Activated CD4-positive, alpha-beta T cell treated with anti-CD3 and anti-CD28 coated beads for 36 hours (primary cell): ENCODE measurements at regions of chr1 and their contacts with region 1.

Region 1: GRCh38 chr1:7902478-7903085 is 38.1 kb downstream of the TNFRSF9 start:
- DNase-seq: peak; percentile 74
- ATAC-seq: peak; percentile 83
- H3K4me3 Mint-ChIP-seq: no peak overlapping the region
- H3K27ac Mint-ChIP-seq: no peak overlapping the region
- H3K4me1 Mint-ChIP-seq: no peaks in the 10 kb centered on the region
- H3K27me3 Mint-ChIP-seq: peaks cover 4% of the 10 kb centered on the region

Region 2: GRCh38 chr1:7667625-7668218 is 234.9 kb before region 1 on chr1:
- CTCF ChIA-PET with region 1: interaction called, 4 read pairs
- POLR2A ChIA-PET with region 1: no interaction called
- intact Hi-C with region 1: loop called (anchors 1 to 2 kb)
- DNase-seq: peak; percentile 90
- ATAC-seq: peak; percentile 83
- H3K4me3 Mint-ChIP-seq: no peak overlapping the region
- H3K27ac Mint-ChIP-seq: no peak overlapping the region
- H3K4me1 Mint-ChIP-seq: no peaks in the 10 kb centered on the region
- H3K27me3 Mint-ChIP-seq: peaks cover 3% of the 10 kb centered on the region

Region 3: GRCh38 chr1:7808253-7808844 is 94.2 kb before region 1 on chr1:
- CTCF ChIA-PET with region 1: interaction called, 6 read pairs
- POLR2A ChIA-PET with region 1: no interaction called
- intact Hi-C with region 1: loop called (anchors 1 kb)
- DNase-seq: no peak
- ATAC-seq: peak; percentile 70
- H3K4me3 Mint-ChIP-seq: no peak overlapping the region
- H3K27ac Mint-ChIP-seq: no peak overlapping the region
- H3K4me1 Mint-ChIP-seq: no peaks in the 10 kb centered on the region
- H3K27me3 Mint-ChIP-seq: no peaks in the 10 kb centered on the region